ENCODE measurements at regions of chr5 and their contacts with region 1.

Region 1: GRCh38 chr5:39217365-39218281 is 1.7 kb downstream of the FYB1 start:
- DNase-seq: peak; percentile 74
- H3K4me3 ChIP-seq: no peak overlapping the region
- H3K27ac ChIP-seq: no peak overlapping the region
- H3K4me1 ChIP-seq: no peaks in the 10 kb centered on the region
- H3K27me3 ChIP-seq: no peaks in the 10 kb centered on the region
- CTCF ChIP-seq: peak; percentile 85 to 90
- POLR2A ChIP-seq: no peak

Region 2: GRCh38 chr5:39074016-39074886 is 143.4 kb before region 1 on chr5 and contains the start of gene RICTOR:
- CTCF ChIA-PET with region 1: interaction called, 23 read pairs
- POLR2A ChIA-PET with region 1: no interaction called
- dilution Hi-C with region 1: no loop called
- intact Hi-C with region 1: loop called (anchors 10 kb)
- DNase-seq: peak; percentile 91
- H3K4me3 ChIP-seq: peak within 1 kb of the TSS; percentile 89 to 99 (median 92)
- H3K27ac ChIP-seq: peak within 1 kb of the TSS; percentile 90
- H3K4me1 ChIP-seq: peaks cover 35% of the 10 kb centered on the region
- H3K27me3 ChIP-seq: no peaks in the 10 kb centered on the region
- CTCF ChIP-seq: no peak
- POLR2A ChIP-seq: peak; percentile 83
- total RNA-seq, gene RICTOR: 38.0 and 39.5 TPM in 2 replicates

Region 3: GRCh38 chr5:39195198-39195826 is 22.3 kb before region 1 on chr5:
- CTCF ChIA-PET with region 1: interaction called, 21 read pairs
- POLR2A ChIA-PET with region 1: no interaction called
- dilution Hi-C with region 1: no loop called
- intact Hi-C with region 1: no loop called
- DNase-seq: no peak
- H3K4me3 ChIP-seq: no peak overlapping the region
- H3K27ac ChIP-seq: no peak overlapping the region
- H3K4me1 ChIP-seq: no peaks in the 10 kb centered on the region
- H3K27me3 ChIP-seq: no peaks in the 10 kb centered on the region
- CTCF ChIP-seq: no peak
- POLR2A ChIP-seq: no peak

Region 4: DNA sequence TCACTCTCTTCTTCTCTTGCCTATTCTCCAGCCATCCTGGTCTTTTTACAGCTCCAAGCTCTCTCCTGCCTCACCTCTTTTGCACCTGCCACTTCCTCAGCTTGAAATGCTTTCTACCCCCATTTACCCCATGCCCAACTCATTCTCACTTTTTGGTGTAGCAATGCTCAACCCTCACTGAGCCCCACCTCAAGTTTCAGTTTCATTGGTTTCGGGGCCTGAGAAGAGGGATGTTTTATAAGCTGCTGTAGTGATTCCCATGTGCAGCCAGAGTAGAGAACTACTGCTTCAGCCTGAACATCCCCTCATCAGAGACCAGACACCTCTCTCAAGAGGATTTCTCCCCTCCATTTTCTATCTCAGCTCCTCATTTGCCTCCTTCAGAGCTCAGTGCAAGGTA is 46.9 kb after region 1 on chr5:
- CTCF ChIA-PET with region 1: interaction called, 14 read pairs
- POLR2A ChIA-PET with region 1: no interaction called
- dilution Hi-C with region 1: no loop called
- intact Hi-C with region 1: no loop called
- DNase-seq: no peak
- H3K4me3 ChIP-seq: no peak overlapping the region
- H3K27ac ChIP-seq: no peak overlapping the region
- H3K4me1 ChIP-seq: no peaks in the 10 kb centered on the region
- H3K27me3 ChIP-seq: no peaks in the 10 kb centered on the region
- CTCF ChIP-seq: no peak
- POLR2A ChIP-seq: no peak

Region 5: GRCh38 chr5:39294736-39295135 is 77.1 kb after region 1 on chr5:
- CTCF ChIA-PET with region 1: interaction called, 12 read pairs
- POLR2A ChIA-PET with region 1: no interaction called
- dilution Hi-C with region 1: no loop called
- intact Hi-C with region 1: no loop called
- DNase-seq: no peak
- H3K4me3 ChIP-seq: no peak overlapping the region
- H3K27ac ChIP-seq: no peak overlapping the region
- H3K4me1 ChIP-seq: no peaks in the 10 kb centered on the region
- H3K27me3 ChIP-seq: no peaks in the 10 kb centered on the region
- CTCF ChIP-seq: no peak
- POLR2A ChIP-seq: no peak

Region 6: DNA sequence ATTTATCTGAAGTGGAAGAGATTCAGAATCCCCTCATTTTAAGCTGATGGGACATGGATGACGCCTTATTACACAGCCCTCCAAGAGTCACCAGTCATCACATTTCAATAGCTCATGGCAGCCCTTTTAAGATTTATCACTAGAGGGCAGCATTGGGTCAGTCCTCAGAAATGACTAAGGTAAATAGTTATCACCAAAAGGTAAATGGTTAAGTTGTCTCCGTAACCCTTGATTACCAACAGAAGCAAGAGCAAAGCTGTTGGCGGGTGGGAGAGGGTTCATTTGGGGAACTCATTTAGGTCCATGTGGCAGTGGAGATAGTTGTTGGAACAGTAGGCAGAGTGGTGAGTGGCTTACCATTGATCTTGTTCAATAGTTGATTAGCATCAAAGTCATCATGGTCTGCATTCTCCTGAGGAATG is 158.7 kb after region 1 on chr5:
- CTCF ChIA-PET with region 1: interaction called, 66 read pairs
- POLR2A ChIA-PET with region 1: interaction called, 3 read pairs
- dilution Hi-C with region 1: no loop called
- intact Hi-C with region 1: loop called (anchors 5 kb)
- DNase-seq: peak; percentile 72
- H3K4me3 ChIP-seq: no peak overlapping the region
- H3K27ac ChIP-seq: no peak overlapping the region
- H3K4me1 ChIP-seq: no peaks in the 10 kb centered on the region
- H3K27me3 ChIP-seq: no peaks in the 10 kb centered on the region
- CTCF ChIP-seq: peak; percentile 57 to 71
- POLR2A ChIP-seq: no peak